Activated B cell treated with CpG ODN at 0.5 μM for 24 hours (primary cell): ENCODE measurements at regions of chr2 and their contacts with region 1.

Region 1: GRCh38 chr2:231482806-231483391 is 18.6 kb upstream of the NCL start:
- DNase-seq: peak; percentile 77
- ATAC-seq: peak; percentile 85
- H3K4me3 Mint-ChIP-seq: peak overlapping the region; percentile 80
- H3K27ac Mint-ChIP-seq: peak overlapping the region; percentile 82
- H3K4me1 Mint-ChIP-seq: peaks cover 9% of the 10 kb centered on the region
- H3K27me3 Mint-ChIP-seq: no peaks in the 10 kb centered on the region
- CTCF ChIP-seq: peak; percentile 29

Region 2: DNA sequence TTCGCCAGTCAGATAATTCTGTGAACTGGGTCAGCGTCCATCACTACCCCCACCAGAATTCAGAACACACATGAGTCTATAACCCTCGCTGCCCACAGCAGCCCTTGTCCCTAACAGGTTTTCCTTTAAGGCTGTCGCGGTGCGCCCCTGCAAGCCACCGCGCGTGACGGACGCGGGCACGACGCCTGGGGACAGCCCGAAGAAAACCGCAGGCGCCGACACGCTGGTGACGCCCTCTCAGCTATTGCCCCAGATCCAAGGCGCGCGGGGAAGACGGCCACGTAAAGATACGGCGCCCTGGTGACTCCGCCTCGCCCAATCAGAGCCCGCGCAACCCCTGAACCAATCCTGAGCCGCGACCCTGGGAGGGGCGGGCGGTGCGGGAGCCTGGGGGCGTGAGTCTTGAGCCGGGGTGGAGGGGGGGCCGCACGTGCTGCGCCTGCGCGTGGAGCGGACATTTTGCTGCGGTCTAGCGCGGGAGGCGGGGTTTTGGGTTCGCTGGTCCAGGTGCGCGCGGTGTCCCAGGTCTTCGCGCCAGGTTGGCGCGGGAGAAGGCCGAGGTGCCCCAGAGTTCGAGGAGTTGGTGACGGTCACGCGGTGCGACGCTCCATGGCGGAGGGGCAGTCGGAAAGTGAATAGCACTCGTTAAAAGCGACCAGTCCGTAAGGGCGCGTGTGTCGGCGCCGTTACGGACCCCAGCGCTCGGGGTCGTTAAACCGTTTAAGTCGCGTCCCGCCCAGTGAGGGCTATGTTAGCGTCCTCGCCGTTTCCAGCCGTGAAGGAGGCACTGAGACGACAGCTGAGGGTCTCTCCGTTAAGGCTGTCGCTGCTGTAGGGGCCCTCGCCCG is 31.4 kb after region 1 on chr2:
- CTCF ChIA-PET with region 1: interaction called, 8 read pairs
- POLR2A ChIA-PET with region 1: interaction called, 12 read pairs
- intact Hi-C with region 1: loop called (anchors 1 kb)
- DNase-seq: peak; percentile 97
- ATAC-seq: peak; percentile 99
- H3K4me3 Mint-ChIP-seq: peak overlapping the region; percentile 92
- H3K27ac Mint-ChIP-seq: peak overlapping the region; percentile 96
- H3K4me1 Mint-ChIP-seq: peaks cover 13% of the 10 kb centered on the region
- H3K27me3 Mint-ChIP-seq: no peaks in the 10 kb centered on the region
- CTCF ChIP-seq: no peak